ENCODE measurements at regions of chr15 and their contacts with region 1.

Region 1: GRCh38 chr15:95259513-95259912 is 1028.2 kb downstream of the MCTP2 start:
- H3K4me3 Mint-ChIP-seq: no peak overlapping the region
- H3K27ac Mint-ChIP-seq: no peak overlapping the region
- H3K4me1 Mint-ChIP-seq: no peaks in the 10 kb centered on the region
- H3K27me3 Mint-ChIP-seq: peaks cover 5% of the 10 kb centered on the region

Region 2: DNA sequence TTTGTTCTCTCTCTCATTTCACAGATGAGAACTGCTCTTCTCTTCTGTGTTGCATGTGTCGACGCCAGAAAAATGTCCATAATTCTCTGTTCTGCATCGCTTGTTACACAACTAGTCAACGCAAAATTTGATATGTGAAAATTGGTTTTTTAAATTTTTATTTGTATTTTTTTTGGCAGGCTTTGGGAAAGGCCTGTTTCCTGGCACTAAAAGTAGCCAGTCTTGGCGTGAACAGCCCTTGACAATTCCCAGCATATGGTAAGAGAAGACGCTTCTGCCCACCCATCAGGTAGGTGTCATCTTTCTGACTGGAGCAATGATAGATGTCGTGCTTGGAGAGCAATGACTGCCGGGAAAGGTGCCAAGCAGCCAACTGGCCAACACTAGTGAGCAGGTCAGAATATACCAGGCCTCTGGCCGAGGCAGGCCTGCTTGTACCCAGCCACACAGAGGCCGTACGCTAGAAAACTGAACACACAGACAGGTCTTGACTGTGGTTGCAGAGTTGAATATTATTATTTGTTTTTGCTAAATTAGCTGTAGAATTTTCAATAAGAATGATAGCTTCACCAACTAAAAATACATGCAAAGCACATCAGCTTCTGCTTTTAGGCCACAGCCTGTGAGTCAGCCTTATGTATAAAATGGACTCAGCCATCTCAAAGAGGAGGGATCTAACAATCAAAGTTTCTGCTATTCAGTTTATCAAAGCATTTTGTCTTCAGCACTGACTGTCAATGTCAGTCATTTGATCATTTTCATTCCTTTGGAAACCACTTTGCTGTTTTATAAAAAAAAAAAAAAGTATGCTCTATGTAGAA is 190.6 kb before region 1 on chr15:
- intact Hi-C with region 1: no loop called
- H3K4me3 Mint-ChIP-seq: no peak overlapping the region
- H3K27ac Mint-ChIP-seq: no peak overlapping the region
- H3K4me1 Mint-ChIP-seq: no peaks in the 10 kb centered on the region
- H3K27me3 Mint-ChIP-seq: no peaks in the 10 kb centered on the region

Region 3: GRCh38 chr15:95350908-95351307 is 91.4 kb after region 1 on chr15:
- intact Hi-C with region 1: no loop called
- H3K4me3 Mint-ChIP-seq: no peak overlapping the region
- H3K27ac Mint-ChIP-seq: no peak overlapping the region
- H3K4me1 Mint-ChIP-seq: no peaks in the 10 kb centered on the region
- H3K27me3 Mint-ChIP-seq: no peaks in the 10 kb centered on the region

Region 4: DNA sequence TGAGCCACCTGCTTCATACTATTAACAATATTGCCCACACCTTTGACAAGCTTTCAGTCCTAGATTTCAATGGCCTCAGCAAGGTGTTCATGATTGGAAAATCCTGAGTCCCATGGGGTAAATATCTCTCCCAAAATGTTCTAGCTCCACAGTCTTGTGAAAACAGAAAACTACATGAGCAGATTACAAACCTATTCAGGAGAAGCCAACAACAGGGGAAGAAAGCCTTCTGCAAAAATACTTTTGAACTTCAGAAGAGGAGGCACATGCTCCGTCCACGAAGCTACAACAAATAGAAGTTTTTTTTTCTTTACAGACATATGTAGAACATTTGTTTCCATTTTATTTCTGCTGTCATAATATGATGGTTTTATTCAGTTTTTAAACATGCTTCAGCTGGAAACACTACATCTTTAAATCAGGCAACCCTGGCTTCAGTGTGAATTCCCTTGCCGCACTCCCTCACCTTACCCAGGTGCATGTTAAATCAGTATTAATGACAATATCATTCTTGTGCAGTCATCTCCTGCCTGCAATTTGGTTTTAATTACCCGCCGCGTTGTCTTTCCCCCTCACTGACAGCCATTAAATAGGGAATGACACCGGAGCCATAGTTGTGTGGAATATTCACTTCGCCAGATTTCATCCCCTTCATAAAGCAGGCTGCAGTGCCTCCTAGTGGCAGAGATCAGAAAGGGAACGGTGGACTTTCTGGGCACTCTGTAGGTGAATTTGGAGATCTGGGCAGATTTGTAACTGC is 1975.5 kb after region 1 on chr15:
- intact Hi-C with region 1: loop called (anchors 1 kb)
- H3K4me3 Mint-ChIP-seq: no peak overlapping the region
- H3K27ac Mint-ChIP-seq: no peak overlapping the region
- H3K4me1 Mint-ChIP-seq: no peaks in the 10 kb centered on the region
- H3K27me3 Mint-ChIP-seq: no peaks in the 10 kb centered on the region